ENCODE measurements at regions of chr7 and their contacts with region 1.

Region 1: DNA sequence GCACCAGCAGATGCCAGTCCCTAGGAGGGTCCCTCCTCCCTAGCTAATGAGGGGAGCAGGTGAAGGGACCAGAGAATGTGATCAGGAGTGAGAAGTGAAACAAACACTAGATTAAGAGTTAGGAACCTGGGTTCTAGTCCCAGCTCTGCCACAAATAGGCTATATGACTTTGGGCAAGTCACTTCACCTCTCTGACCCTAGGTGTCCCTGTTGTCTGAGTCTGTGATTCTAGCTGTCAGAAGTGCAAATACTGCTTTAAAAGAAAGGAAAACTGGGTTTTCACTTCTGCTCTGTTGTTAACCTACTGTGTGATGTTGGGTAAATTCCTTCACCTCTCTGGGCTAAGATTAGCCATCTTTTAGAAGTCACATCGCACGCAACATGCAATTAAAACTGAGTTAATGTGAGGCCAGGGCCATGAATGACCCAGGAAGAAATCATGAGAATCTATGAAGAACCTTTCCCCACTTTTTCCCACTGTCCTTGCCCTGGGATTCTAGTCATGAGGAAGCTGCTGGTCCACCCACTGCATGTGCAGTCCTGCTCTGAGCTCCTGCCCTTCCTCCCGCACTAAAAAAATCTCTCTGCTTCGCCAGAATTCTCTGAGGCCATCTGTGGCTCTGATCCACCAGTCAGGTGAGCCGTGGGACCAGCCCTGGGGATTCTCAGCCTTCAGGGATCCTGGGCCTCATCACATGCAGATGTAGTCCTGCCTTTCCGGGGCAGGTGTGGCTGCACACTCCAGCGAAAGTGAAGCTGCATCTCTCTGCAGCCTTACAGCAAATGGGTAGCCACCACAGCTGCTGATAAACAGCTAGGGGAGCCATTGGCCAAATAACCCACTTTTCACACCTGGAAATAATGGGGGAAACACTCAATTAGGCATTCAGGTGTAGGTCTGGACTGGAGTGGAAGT is 181.7 kb downstream of the PLXNA4 start:
- DNase-seq: peak in 7 of 9 donors; percentile 34 to 62 (median 40)
- ATAC-seq: peak; percentile 61
- H3K4me3 ChIP-seq: no peak overlapping the region
- H3K4me3 Mint-ChIP-seq: peak overlapping the region in 1 of 10 donors; percentile 36
- H3K27ac ChIP-seq: no peak overlapping the region
- H3K27ac Mint-ChIP-seq: peak overlapping the region in 2 of 9 donors; percentile 7 to 53
- H3K4me1 ChIP-seq: no peaks in the 10 kb centered on the region
- H3K4me1 Mint-ChIP-seq: peaks cover 0 to 30% (median 6%) of the 10 kb centered on the region in 7 donors
- H3K27me3 ChIP-seq: no peaks in the 10 kb centered on the region
- H3K27me3 Mint-ChIP-seq: peaks cover 0 to 27% (median 4%) of the 10 kb centered on the region in 5 donors

Region 2: DNA sequence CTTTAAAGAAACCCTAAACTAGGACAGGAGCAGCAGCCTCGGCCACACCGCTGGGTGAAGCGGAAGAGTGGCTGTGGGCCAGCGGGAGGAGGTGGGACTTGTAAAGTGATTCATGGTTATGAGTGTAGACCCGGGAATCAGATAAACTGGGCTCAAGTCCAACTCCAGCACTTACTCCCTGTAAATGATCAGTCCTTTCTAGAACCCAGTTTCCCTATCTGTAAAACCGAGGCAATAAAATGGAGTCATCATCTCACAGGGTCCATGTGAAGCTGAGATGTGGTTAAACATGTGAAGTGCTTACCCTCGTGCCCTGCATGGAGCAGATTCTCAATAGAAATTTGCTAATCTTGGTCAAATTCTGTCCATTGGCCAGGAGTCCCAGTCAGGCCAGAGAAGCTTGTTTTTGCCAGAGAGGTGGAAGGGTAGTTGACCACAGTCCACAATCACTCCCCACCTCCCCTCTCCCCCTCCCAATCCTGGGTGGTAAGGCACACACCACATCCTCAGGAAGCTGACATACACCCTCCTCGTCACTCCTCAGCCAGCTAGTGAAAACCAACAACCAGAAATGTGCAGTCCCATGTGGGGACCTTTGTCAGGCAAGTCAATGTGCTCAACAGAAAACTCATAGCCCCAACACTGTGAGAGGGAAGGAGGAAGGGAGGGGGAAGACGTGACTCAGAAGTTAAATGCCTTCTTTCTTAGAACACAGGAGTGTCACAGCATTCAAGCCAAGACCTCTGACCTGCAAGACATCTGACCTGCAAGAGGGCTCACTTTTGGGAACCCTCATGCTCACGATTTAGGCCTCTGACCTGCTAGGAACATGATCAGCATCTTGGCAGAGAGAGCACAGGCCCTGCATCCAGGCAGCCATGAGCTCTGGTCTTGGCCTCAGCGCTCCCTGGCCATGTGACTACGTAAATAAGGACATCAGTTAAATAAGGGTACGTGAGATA is 36.6 kb after region 1 on chr7:
- CTCF ChIA-PET with region 1: interaction called, 3 read pairs
- POLR2A ChIA-PET with region 1: interaction called, 3 read pairs
- intact Hi-C with region 1: loop called in 1 of 2 experiments (anchors 2 kb)
- DNase-seq: peak in 8 of 9 donors; percentile 18 to 75 (median 60)
- ATAC-seq: peak; percentile 85
- H3K4me3 ChIP-seq: peak overlapping the region; percentile 21
- H3K4me3 Mint-ChIP-seq: peak overlapping the region; percentile 22 to 83 (median 58)
- H3K27ac ChIP-seq: peak overlapping the region; percentile 34
- H3K27ac Mint-ChIP-seq: peak overlapping the region; percentile 70 to 97 (median 87)
- H3K4me1 ChIP-seq: peaks cover 47 to 69% of the 10 kb centered on the region in 2 donors
- H3K4me1 Mint-ChIP-seq: peaks cover 49 to 93% (median 83%) of the 10 kb centered on the region in 7 donors
- H3K27me3 ChIP-seq: no peaks in the 10 kb centered on the region
- H3K27me3 Mint-ChIP-seq: no peaks in the 10 kb centered on the region

Region 3: DNA sequence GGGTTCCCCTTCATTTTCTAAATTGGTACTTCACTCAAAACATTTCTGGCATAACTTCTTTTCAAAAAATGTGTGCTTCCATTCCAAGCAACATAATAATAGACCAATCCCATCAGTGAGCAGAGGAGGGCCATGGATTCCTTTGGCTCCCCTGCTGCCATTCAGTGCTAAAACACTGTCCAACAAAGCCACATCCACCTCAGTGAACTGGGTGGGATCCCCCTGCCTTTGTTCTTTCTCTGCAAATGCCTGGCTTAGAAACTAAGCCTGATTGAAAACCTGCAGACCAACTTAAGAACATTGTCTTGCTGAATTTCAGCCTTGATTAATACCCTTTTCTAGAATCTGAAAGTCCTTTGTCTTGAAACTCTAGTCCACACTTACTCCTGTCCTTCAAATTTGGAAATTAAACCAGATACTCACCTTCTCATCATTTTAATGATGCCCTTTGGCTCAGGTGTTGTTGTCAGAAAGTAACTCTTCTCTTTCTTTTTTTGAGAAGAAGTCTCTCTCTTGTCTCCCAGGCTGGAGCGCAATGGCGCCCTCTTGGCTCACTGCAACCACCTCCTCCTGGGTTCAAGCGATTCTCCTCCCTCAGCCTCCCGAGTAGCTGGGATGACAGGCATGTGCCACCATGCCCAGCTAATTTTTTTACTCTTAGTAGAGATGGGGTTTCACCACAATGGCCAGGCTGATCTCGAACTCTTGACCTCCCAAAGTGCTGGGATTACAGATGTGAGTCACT is 49.4 kb after region 1 on chr7:
- CTCF ChIA-PET with region 1: no interaction called
- POLR2A ChIA-PET with region 1: no interaction called
- intact Hi-C with region 1: no loop called
- DNase-seq: no peak
- ATAC-seq: no peak
- H3K4me3 ChIP-seq: no peak overlapping the region
- H3K4me3 Mint-ChIP-seq: peak overlapping the region in 4 of 10 donors; percentile 5 to 54 (median 19)
- H3K27ac ChIP-seq: no peak overlapping the region
- H3K27ac Mint-ChIP-seq: peak overlapping the region in 5 of 9 donors; percentile 32 to 70 (median 47)
- H3K4me1 ChIP-seq: peaks cover 0 to 17% of the 10 kb centered on the region in 2 donors
- H3K4me1 Mint-ChIP-seq: peaks cover 21 to 87% (median 48%) of the 10 kb centered on the region in 7 donors
- H3K27me3 ChIP-seq: no peaks in the 10 kb centered on the region
- H3K27me3 Mint-ChIP-seq: peaks cover 0 to 3% (median 0%) of the 10 kb centered on the region in 5 donors

Region 4: DNA sequence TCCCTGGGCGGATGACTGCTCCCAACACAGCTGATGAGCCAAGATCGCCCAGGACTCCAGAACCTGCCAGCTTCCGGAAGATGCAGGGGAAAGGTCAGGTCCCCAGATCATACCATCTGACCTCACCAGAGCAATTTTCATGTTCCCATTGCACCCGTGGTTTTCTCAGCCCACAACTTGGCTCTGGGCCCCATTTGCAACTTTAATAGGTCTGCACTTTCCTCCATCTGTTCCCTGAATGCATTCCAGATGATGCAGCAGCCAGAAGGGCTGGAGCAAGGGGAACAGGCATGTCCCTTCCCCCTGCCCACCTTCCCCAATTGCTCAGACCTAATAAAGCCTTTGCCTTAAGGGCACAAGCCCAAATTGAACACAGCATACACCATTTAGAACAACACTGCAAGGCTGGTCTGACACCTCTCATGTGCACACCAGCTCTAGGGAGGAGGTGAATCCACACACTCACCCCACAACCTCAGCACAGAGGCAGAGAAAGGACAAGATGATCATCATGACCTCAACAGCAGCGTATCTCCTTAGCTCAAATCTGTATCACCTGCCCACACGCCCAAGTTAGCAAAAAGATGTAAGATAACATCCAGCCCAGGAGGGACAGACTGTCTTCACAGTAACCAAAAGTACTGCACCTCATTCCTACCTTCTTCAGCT is 94.2 kb after region 1 on chr7:
- CTCF ChIA-PET with region 1: no interaction called
- POLR2A ChIA-PET with region 1: no interaction called
- intact Hi-C with region 1: loop called in 1 of 2 experiments (anchors 1 kb)
- DNase-seq: no peak
- ATAC-seq: no peak
- H3K4me3 ChIP-seq: no peak overlapping the region
- H3K4me3 Mint-ChIP-seq: no peak overlapping the region
- H3K27ac ChIP-seq: no peak overlapping the region
- H3K27ac Mint-ChIP-seq: peak overlapping the region in 1 of 9 donors; percentile 3
- H3K4me1 ChIP-seq: peaks cover 22 to 31% of the 10 kb centered on the region in 2 donors
- H3K4me1 Mint-ChIP-seq: peaks cover 29 to 56% (median 45%) of the 10 kb centered on the region in 7 donors
- H3K27me3 ChIP-seq: no peaks in the 10 kb centered on the region
- H3K27me3 Mint-ChIP-seq: peaks cover 0 to 42% (median 0%) of the 10 kb centered on the region in 5 donors

Region 5: GRCh38 chr7:132575419-132575981 is 181.0 kb after region 1 on chr7:
- CTCF ChIA-PET with region 1: interaction called, 136 read pairs
- POLR2A ChIA-PET with region 1: no interaction called
- intact Hi-C with region 1: loop called (anchors 1 kb)
- DNase-seq: peak in 1 of 9 donors; percentile 29
- ATAC-seq: no peak
- H3K4me3 ChIP-seq: peak overlapping the region; percentile 52
- H3K4me3 Mint-ChIP-seq: peak overlapping the region; percentile 30 to 91 (median 75)
- H3K27ac ChIP-seq: no peak overlapping the region
- H3K27ac Mint-ChIP-seq: peak overlapping the region in 1 of 9 donors; percentile 11
- H3K4me1 ChIP-seq: peaks cover 0 to 5% of the 10 kb centered on the region in 2 donors
- H3K4me1 Mint-ChIP-seq: peaks cover 14 to 48% (median 19%) of the 10 kb centered on the region in 7 donors
- H3K27me3 ChIP-seq: peaks cover 5 to 14% of the 10 kb centered on the region in 2 donors
- H3K27me3 Mint-ChIP-seq: peaks cover 66 to 88% (median 71%) of the 10 kb centered on the region in 5 donors

Region 6: DNA sequence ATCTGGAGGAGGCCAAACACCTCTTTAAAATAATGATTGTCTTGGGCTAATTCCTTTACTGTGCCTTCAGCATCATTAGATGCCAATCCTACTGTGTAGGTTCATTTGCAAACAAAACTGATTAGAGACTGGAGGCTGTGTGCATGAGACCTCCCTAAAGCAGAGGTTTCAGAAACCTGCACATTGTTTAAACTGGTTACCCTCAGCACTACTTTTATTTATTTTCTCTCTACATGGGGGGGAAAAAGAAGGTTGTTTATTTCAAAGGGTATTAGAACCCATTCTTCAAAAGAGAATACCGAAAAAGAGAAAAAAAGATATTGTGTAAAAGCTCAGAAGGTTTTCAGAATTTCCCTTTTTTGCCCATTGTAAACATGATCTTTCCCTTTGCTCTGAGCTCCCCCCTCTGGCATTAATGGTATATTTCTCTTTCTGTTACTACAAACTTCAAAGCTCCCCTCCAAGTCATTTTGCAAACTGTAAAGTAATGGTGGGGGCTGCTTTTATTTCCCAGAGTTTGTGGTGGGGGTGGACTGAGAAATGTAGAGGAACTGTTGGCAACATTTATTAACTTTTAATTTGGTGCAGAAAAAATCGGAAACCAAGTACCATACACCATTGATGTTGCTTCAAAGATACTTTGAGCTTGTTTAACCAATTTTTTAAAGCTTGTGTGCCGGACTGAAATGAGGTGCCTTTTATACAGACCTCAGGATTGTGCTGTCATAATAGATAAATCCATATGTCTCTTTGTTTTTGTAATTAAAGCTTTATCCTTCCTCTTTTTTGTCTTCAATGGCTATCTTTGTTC is 1039.7 kb after region 1 on chr7:
- CTCF ChIA-PET with region 1: interaction called, 3 read pairs
- POLR2A ChIA-PET with region 1: no interaction called
- intact Hi-C with region 1: loop called in 1 of 2 experiments (anchors 2 kb)
- DNase-seq: peak in 5 of 9 donors; percentile 5 to 36 (median 31)
- ATAC-seq: peak; percentile 54
- H3K4me3 ChIP-seq: no peak overlapping the region
- H3K4me3 Mint-ChIP-seq: no peak overlapping the region
- H3K27ac ChIP-seq: no peak overlapping the region
- H3K27ac Mint-ChIP-seq: peak overlapping the region in 1 of 9 donors; percentile 17
- H3K4me1 ChIP-seq: no peaks in the 10 kb centered on the region
- H3K4me1 Mint-ChIP-seq: peaks cover 0 to 18% (median 13%) of the 10 kb centered on the region in 7 donors
- H3K27me3 ChIP-seq: no peaks in the 10 kb centered on the region
- H3K27me3 Mint-ChIP-seq: no peaks in the 10 kb centered on the region

Measured in naive thymus-derived CD4-positive, alpha-beta T cell (primary cell).